Endothelial cell of umbilical vein (primary cell): ENCODE measurements at regions of chr15 and their contacts with region 1.

Region 1: GRCh38 chr15:77224352-77224751 is 153.4 kb upstream of the TSPAN3 start:
- DNase-seq: peak; percentile 72
- H3K4me3 ChIP-seq: peak overlapping the region in 1 of 3 experiments; percentile 18
- H3K27ac ChIP-seq: peak overlapping the region; percentile 44
- H3K4me1 ChIP-seq: peaks cover 35% of the 10 kb centered on the region
- H3K27me3 ChIP-seq: no peaks in the 10 kb centered on the region
- CTCF ChIP-seq: no peak
- POLR2A ChIP-seq: peak; percentile 22

Region 2: GRCh38 chr15:77209221-77209620 is 15.1 kb before region 1 on chr15:
- CTCF ChIA-PET with region 1: interaction called, 6 read pairs
- POLR2A ChIA-PET with region 1: no interaction called
- dilution Hi-C with region 1: no loop called
- intact Hi-C with region 1: loop called (anchors 1 kb)
- DNase-seq: no peak
- H3K4me3 ChIP-seq: no peak overlapping the region
- H3K27ac ChIP-seq: peak overlapping the region; percentile 1
- H3K4me1 ChIP-seq: peaks cover 16% of the 10 kb centered on the region
- H3K27me3 ChIP-seq: no peaks in the 10 kb centered on the region
- CTCF ChIP-seq: no peak
- POLR2A ChIP-seq: no peak